ENCODE measurements at regions of chr20 and their contacts with region 1.

Region 1: DNA sequence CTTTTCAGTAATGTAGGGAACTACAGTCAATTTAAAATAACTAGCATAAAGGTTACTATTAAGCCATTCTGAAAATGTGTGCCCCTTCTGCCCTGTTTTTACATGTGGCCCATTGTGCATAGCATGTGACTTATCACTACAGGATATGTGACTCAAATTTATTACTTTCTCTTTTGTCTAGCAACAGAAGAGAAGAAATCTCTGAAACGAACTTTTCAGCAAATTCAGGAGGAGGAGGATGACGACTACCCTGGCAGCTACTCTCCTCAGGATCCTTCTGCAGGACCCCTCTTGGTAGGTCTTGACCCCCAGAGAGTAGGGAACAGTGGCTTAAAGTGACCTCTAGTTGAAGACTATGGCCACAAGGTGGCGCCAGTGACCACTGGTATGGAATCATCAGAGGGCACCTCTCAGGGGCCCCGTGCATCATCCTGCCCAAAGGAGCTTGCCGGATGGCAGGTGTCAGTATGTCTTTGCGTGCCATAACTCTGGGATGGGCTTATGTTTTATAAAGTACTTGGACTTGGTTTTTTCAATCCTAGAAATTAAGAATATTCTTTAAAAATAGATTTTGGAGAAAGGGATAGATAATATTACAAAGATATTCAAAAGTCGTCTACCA is 23.9 kb downstream of the RPRD1B start:
- DNase-seq: peak; percentile 86
- H3K4me3 ChIP-seq: no peak overlapping the region
- H3K27ac ChIP-seq: no peak overlapping the region
- H3K4me1 ChIP-seq: peaks cover 5% of the 10 kb centered on the region
- CTCF ChIP-seq: peak; percentile 96

Region 2: GRCh38 chr20:38113401-38114325 is 56.2 kb after region 1 on chr20:
- CTCF ChIA-PET with region 1: interaction called, 3 read pairs
- POLR2A ChIA-PET with region 1: no interaction called
- intact Hi-C with region 1: loop called (anchors 2 kb)
- DNase-seq: peak; percentile 21
- H3K4me3 ChIP-seq: no peak overlapping the region
- H3K27ac ChIP-seq: no peak overlapping the region
- H3K4me1 ChIP-seq: no peaks in the 10 kb centered on the region
- CTCF ChIP-seq: peak; percentile 65

Region 3: DNA sequence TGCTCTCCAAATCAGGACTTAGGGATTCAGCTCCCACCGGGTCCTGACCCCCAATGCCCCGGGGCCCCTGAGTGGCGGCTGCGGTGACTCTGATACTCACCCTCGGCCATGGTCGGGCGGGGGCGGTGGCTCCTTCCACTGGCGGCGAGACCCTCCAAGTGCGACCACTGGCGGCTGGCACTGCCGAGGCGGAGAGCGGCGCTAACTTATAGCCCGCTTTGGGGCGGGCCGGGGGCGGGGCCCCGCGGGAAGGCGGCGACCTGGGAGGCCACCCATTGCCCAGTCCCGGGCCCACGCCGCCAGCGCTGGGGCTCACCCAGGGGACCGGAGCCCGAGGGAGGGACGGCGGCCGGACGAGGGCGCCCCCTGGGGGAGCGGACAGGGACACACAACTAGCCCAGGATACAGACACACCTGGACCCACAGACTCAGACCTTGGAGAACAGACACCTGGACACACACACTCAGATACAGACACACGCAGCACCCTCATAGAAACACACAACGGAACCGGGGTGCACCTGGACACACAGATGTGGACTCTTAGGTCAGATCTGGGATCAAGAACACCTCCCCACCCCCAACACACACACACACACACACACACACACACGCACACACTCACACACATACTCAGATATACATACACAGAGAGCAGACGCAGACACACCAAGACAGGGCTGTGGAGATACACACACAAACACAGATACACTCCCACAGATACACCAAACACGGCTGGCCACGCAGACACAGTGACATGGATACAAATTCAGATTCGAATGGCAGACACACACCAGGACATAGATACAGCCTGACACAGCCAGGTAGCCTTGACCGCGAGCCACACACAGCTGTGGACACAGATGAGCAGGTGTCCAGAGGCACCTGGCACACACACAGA is 107.9 kb after region 1 on chr20 and contains the start of gene TGM2:
- CTCF ChIA-PET with region 1: no interaction called
- POLR2A ChIA-PET with region 1: no interaction called
- intact Hi-C with region 1: loop called (anchors 1 kb)
- DNase-seq: peak; percentile 40
- H3K4me3 ChIP-seq: no peak within 1 kb of the TSS
- H3K27ac ChIP-seq: no peak within 1 kb of the TSS
- H3K4me1 ChIP-seq: no peaks in the 10 kb centered on the region
- CTCF ChIP-seq: peak; percentile 82
- total RNA-seq, gene TGM2: not detected in 2 replicates

Region 4: DNA sequence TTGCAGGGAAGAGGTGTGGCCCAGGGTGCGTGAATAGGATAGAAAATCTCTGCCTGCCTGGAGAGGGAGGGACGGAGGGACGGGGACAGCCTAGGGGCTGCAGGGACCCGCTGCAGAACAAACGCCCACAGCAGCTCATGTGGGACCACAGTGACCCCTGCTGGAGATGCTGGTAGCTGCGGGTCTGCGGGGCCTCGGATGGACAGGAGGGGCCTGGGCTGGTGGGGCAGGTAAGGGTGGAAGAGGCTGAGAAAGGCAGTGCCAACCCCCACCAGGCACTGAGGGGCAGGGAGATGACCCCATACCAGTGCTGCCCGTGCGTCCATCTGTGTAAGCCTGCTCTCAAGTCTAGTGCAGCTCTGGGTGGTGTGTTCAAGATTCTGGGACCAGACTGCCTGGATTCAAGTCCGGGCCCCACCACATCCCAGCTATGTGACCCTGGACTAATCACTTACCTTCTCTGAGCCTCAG is 163.7 kb after region 1 on chr20:
- CTCF ChIA-PET with region 1: interaction called, 8 read pairs
- POLR2A ChIA-PET with region 1: no interaction called
- intact Hi-C with region 1: loop called (anchors 1 kb)
- DNase-seq: peak; percentile 62
- H3K4me3 ChIP-seq: no peak overlapping the region
- H3K27ac ChIP-seq: no peak overlapping the region
- H3K4me1 ChIP-seq: no peaks in the 10 kb centered on the region
- CTCF ChIP-seq: peak; percentile 89

Measured in OCI-LY7 (cell line).